Left ventricle myocardium inferior (tissue), 1 donor: ENCODE measurements at regions of chr2 and their contacts with region 1.

Region 1: DNA sequence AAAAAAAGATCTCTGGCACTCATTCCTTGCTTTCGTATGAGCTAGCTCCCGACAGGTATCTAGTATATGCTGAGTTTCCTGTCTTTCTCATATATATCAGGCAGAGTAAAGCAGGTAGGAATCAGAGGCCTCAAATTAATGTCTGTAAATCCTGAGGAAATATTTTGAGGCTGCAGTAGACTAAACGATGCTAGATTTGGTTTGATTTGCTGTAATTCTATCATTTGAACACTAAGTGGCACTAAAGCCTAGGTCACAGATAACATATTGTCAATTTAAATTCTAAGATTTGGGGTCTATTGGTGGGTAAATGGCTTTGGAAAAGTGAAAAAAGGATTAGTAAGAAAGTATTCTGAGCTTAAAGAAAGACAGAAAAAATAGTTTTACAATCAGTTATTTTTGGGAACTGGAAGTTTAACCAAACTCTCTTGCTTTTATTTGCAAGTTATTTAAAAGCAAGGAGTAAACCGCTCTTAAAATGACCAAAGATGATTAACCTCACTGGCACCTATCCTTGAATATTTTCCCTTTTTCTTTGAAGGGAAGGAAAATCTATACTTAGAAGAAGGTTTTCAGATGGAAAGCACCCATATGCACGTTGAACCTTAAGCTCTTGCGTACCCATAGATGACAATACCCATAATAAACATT is 37.6 kb upstream of the SLC4A10 start:
- DNase-seq: no peak
- H3K4me3 ChIP-seq: no peak overlapping the region
- H3K27ac ChIP-seq: no peak overlapping the region
- H3K4me1 ChIP-seq: no peaks in the 10 kb centered on the region
- H3K27me3 ChIP-seq: peaks cover 13% of the 10 kb centered on the region
- CTCF ChIP-seq: peak; percentile 61

Region 2: DNA sequence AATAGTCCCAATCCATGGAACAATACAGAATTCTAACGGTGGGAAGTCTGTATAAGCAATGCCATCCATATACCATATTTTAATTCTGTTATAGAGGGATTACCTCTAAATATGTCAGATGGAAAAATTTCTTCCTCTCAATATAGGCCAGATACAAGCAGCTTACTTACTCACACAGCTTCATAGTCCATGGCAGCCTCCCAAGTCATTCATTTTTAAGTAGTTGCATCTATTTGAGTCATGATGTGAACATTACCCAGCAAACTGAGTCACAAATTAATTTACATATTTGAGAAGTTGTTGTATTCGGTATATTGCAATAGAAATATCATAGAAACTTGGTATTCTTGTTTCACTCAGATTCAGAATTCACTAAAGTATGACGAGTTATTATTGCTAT is 150.2 kb before region 1 on chr2:
- intact Hi-C with region 1: no loop called
- DNase-seq: no peak
- H3K4me3 ChIP-seq: no peak overlapping the region
- H3K27ac ChIP-seq: no peak overlapping the region
- H3K4me1 ChIP-seq: no peaks in the 10 kb centered on the region
- H3K27me3 ChIP-seq: peaks cover 89% of the 10 kb centered on the region
- CTCF ChIP-seq: no peak

Region 3: GRCh38 chr2:161946489-161947107 is 360.0 kb after region 1 on chr2:
- intact Hi-C with region 1: loop called (anchors 10 kb)
- DNase-seq: no peak
- H3K4me3 ChIP-seq: no peak overlapping the region
- H3K27ac ChIP-seq: no peak overlapping the region
- H3K4me1 ChIP-seq: no peaks in the 10 kb centered on the region
- H3K27me3 ChIP-seq: peaks cover 55% of the 10 kb centered on the region
- CTCF ChIP-seq: peak; percentile 55

Region 4: GRCh38 chr2:162297925-162298552 is 711.4 kb after region 1 on chr2:
- intact Hi-C with region 1: loop called (anchors 10 kb)
- DNase-seq: no peak
- H3K4me3 ChIP-seq: no peak overlapping the region
- H3K27ac ChIP-seq: no peak overlapping the region
- H3K4me1 ChIP-seq: no peaks in the 10 kb centered on the region
- H3K27me3 ChIP-seq: no peaks in the 10 kb centered on the region
- CTCF ChIP-seq: peak; percentile 90